Stomach (tissue), 19 donors: ENCODE measurements at regions of chr11 and their contacts with region 1.

Region 1: GRCh38 chr11:5808500-5809121 is at the start of gene OR52N2:
- DNase-seq: peak; percentile 73 to 88
- H3K4me3 ChIP-seq: peak within 1 kb of the TSS; percentile 43 to 55 (median 50)
- H3K27ac ChIP-seq: peak within 1 kb of the TSS in 1 of 5 donors; percentile 15
- H3K4me1 ChIP-seq: peaks cover 0 to 14% (median 10%) of the 10 kb centered on the region in 4 donors
- H3K27me3 ChIP-seq: peaks cover 0 to 9% (median 0%) of the 10 kb centered on the region in 3 donors
- CTCF ChIP-seq: peak in 5 of 7 experiments; percentile 51 to 80 (median 76)
- EP300 ChIP-seq: no peak
- POLR2A ChIP-seq: no peak
- total RNA-seq, gene OR52N2: not detected

Region 2: GRCh38 chr11:5473921-5474320 is 334.7 kb before region 1 on chr11:
- intact Hi-C with region 1: loop called (anchors 5 kb)
- DNase-seq: no peak
- H3K4me3 ChIP-seq: no peak overlapping the region
- H3K27ac ChIP-seq: no peak overlapping the region
- H3K4me1 ChIP-seq: no peaks in the 10 kb centered on the region
- H3K27me3 ChIP-seq: no peaks in the 10 kb centered on the region
- CTCF ChIP-seq: no peak
- EP300 ChIP-seq: no peak
- POLR2A ChIP-seq: no peak

Region 3: DNA sequence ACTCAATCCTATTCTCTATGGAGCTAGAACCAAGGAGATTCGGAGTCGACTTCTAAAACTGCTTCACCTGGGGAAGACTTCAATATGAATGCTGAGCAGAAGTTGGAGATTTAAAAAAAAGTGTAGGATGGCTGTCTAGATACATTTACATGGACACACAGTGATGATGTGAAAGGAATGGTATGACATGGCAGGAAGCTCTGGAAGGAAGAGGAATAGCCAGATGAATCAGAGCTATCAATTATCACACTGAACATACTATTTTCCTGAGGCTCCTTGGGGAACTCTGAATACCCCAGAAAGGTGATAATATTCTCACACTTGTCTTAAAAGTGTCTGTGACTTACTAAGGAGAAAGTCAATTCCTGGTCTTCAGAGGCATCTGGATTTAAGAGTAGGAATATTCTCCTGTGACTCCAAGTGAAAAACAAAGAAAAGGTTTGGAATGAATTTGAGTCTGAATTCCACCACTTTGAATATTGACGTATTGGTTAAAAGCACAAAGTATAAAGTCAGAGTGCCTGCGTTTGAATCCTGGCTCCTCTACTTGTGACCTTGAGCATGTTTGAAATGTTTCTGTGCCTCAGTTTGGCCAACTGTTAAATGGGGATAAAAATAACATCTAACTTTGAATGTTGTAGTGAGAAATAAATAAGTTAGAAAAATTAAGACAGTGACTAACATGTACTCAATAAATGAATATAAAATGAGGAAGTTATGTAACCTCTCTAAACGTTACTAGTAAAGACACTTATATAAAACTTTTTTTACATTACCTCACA is 318.8 kb before region 1 on chr11:
- intact Hi-C with region 1: loop called (anchors 5 kb)
- DNase-seq: no peak
- H3K4me3 ChIP-seq: no peak overlapping the region
- H3K27ac ChIP-seq: no peak overlapping the region
- H3K4me1 ChIP-seq: no peaks in the 10 kb centered on the region
- H3K27me3 ChIP-seq: no peaks in the 10 kb centered on the region
- CTCF ChIP-seq: no peak
- EP300 ChIP-seq: no peak
- POLR2A ChIP-seq: no peak

Region 4: DNA sequence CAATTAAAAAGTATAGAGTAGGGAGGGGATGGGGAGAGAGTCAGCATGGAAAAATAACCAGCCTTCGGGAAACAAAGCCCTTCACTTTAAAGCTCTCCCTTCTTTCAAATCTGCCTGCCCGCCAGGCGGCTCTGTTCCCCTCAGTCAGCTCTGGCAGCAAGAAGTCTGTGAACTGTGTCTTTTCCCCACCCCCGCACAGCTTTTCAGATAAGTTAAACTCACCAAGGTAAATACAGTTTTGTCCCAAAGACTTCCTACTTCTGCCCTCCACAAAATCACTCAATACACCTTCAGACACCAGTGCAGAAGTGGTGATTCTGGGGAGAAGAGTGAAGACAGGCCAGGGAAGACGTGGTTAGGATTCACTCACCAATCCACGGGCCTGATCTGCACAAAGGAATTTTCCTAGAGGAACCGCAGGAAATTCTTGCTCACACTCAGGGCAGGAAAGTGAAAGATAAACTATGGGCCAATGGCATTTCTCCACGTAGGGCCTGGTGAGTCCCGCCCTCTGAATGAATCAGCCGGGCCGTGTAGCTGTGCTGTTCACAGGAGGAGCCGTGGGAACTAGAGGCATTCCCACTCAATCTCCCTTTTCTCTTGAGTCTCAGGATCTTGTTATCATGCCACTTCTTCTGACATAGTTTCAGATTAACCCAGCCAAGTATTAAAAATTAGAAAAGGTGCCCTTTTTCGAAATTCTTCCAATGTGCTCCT is 123.8 kb before region 1 on chr11 and contains the start of gene TRIM5:
- intact Hi-C with region 1: no loop called
- DNase-seq: peak; percentile 89 to 96
- H3K4me3 ChIP-seq: peak within 1 kb of the TSS; percentile 40 to 52 (median 44)
- H3K27ac ChIP-seq: peak within 1 kb of the TSS; percentile 84 to 96 (median 91)
- H3K4me1 ChIP-seq: peaks cover 10 to 51% (median 18%) of the 10 kb centered on the region in 4 donors
- H3K27me3 ChIP-seq: no peaks in the 10 kb centered on the region
- CTCF ChIP-seq: peak in 4 of 7 experiments; percentile 19 to 67 (median 44)
- EP300 ChIP-seq: no peak
- POLR2A ChIP-seq: no peak
- total RNA-seq, gene TRIM5: 12.6 to 81.4 (median 28.0) TPM in 4 of 5 donors, not detected in the other